ENCODE measurements at regions of chr15 and their contacts with region 1.

Region 1: GRCh38 chr15:31215490-31216214 is 111.0 kb upstream of the KLF13 start:
- DNase-seq: peak; percentile 95 to 96
- H3K4me3 ChIP-seq: peak overlapping the region in 1 of 3 donors; percentile 41
- H3K27ac ChIP-seq: peak overlapping the region; percentile 93 to 95 (median 95)
- H3K4me1 ChIP-seq: peaks cover 20 to 22% of the 10 kb centered on the region in 2 donors
- H3K27me3 ChIP-seq: no peaks in the 10 kb centered on the region
- CTCF ChIP-seq: peak; percentile 69 to 87 (median 80)
- POLR2A ChIP-seq: peak in 1 of 2 donors; percentile 73

Region 2: DNA sequence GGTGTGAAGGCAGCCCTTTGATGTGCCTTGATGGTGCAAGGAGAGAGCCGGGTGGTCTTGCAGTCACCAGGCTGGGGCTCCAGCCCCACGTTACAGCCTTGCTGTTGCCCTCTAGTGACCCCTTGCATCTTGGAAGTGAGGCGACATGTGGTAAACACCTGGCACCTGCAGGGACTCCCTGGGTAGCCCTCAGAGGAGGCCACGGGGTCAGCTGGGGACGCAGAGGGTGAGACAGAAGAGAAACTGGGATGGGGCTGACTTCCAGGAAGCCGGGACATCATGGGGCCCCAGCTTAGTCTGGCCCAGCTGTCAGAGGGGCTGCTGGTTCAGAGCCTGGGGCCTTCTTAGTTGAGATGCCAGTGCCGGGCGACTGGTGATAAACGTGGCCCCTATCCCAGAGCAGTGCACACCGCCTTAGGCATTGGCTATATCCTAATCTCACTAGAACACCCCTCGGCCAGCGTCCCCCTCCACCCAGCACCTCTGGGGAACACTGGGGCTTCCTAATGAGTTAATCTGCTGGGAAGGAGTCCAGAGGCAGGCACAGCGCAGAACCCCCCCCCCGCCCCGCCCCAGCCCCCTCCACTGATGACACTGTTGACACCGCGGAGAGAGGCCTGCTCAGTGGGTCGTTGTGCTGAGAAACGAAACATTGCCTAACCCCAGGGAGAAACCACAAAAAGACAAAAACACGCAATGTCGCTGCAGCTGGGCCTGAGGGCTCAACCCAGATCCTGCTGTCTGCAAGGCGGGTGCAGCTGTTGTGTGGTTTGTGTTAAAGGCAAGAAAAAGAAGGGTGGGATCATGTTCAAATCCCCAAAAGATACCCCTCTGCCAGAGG is 50.4 kb after region 1 on chr15:
- intact Hi-C with region 1: loop called (anchors 5 kb)
- DNase-seq: no peak
- H3K4me3 ChIP-seq: no peak overlapping the region
- H3K27ac ChIP-seq: peak overlapping the region in 1 of 3 donors; percentile 83
- H3K4me1 ChIP-seq: peaks cover 38 to 87% of the 10 kb centered on the region in 2 donors
- H3K27me3 ChIP-seq: no peaks in the 10 kb centered on the region
- CTCF ChIP-seq: no peak
- POLR2A ChIP-seq: no peak

Measured in thyroid gland (tissue), 4 donors.